Activated B cell treated with CpG ODN at 0.5 μM for 24 hours (primary cell): ENCODE measurements at regions of chr11 and their contacts with region 1.

Region 1: GRCh38 chr11:68370211-68371111 is 58.1 kb downstream of the LRP5 start:
- DNase-seq: peak; percentile 44
- ATAC-seq: peak; percentile 84
- H3K4me3 Mint-ChIP-seq: peak overlapping the region; percentile 81
- H3K27ac Mint-ChIP-seq: peak overlapping the region; percentile 84
- H3K4me1 Mint-ChIP-seq: peaks cover 72% of the 10 kb centered on the region
- H3K27me3 Mint-ChIP-seq: peaks cover 5% of the 10 kb centered on the region
- CTCF ChIP-seq: no peak

Region 2: DNA sequence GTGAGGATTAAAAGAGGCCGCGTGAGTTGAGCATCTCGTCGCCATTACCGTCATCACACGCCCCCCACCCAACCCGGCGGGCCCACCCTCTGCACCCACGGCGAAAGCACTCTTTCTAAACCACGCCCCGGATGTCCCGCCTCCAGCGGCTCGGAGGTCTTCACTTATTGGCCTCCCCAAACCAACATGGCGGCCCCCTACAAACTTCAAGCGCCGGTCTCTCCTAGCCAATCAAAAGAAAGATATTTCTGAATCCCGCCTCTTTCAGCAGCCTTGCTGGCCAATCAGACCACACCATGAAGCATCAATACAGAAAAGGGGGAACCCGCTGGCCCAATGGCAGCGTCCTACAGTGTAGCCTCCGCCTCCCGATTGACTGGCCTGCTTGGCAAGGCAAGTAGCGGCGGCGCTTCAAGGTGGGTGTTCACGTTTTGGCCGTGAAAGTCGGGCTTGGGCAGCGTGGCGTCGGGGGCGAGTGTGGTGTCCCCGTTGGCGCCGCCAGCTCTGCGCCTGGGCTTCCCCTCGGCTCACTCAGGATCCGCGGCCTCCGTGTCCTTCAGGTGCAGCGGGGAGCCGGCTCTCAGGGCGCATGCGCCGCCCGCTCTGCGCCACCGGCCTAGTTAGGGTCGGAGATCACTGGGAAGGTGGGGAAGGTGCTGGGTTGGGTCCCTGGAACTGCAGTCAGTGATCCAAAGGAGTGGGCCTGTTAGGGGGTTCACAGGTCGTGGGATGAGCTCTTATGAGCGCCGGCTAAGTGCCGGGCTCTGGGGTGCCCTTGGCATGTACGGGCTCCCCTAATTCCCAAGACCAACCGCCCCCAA is 339.9 kb before region 1 on chr11 and contains the start of gene NDUFS8:
- CTCF ChIA-PET with region 1: no interaction called
- POLR2A ChIA-PET with region 1: no interaction called
- intact Hi-C with region 1: loop called (anchors 5 kb)
- DNase-seq: peak; percentile 92
- ATAC-seq: peak; percentile 97
- H3K4me3 Mint-ChIP-seq: peak within 1 kb of the TSS; percentile 93
- H3K27ac Mint-ChIP-seq: peak within 1 kb of the TSS; percentile 83
- H3K4me1 Mint-ChIP-seq: peaks cover 22% of the 10 kb centered on the region
- H3K27me3 Mint-ChIP-seq: no peaks in the 10 kb centered on the region
- CTCF ChIP-seq: no peak
- total RNA-seq, gene NDUFS8: 93.7 and 101 TPM in 2 replicates

Region 3: GRCh38 chr11:68271781-68272608 is 98.5 kb before region 1 on chr11 and contains the start of gene C11orf24:
- CTCF ChIA-PET with region 1: no interaction called
- POLR2A ChIA-PET with region 1: interaction called, 32 read pairs
- intact Hi-C with region 1: loop called (anchors 2 kb)
- DNase-seq: peak; percentile 95
- ATAC-seq: peak; percentile 78
- H3K4me3 Mint-ChIP-seq: peak within 1 kb of the TSS; percentile 95
- H3K27ac Mint-ChIP-seq: peak within 1 kb of the TSS; percentile 98
- H3K4me1 Mint-ChIP-seq: peaks cover 79% of the 10 kb centered on the region
- H3K27me3 Mint-ChIP-seq: no peaks in the 10 kb centered on the region
- CTCF ChIP-seq: no peak
- total RNA-seq, gene C11orf24: 75.5 and 78.0 TPM in 2 replicates

Region 4: GRCh38 chr11:68383976-68384501 is 13.6 kb after region 1 on chr11:
- CTCF ChIA-PET with region 1: interaction called, 10 read pairs
- POLR2A ChIA-PET with region 1: interaction called, 39 read pairs
- intact Hi-C with region 1: loop called (anchors 1 kb)
- DNase-seq: peak; percentile 64
- ATAC-seq: peak; percentile 45
- H3K4me3 Mint-ChIP-seq: no peak overlapping the region
- H3K27ac Mint-ChIP-seq: no peak overlapping the region
- H3K4me1 Mint-ChIP-seq: peaks cover 45% of the 10 kb centered on the region
- H3K27me3 Mint-ChIP-seq: no peaks in the 10 kb centered on the region
- CTCF ChIP-seq: peak; percentile 50

Region 5: GRCh38 chr11:68441466-68442230 is 71.2 kb after region 1 on chr11:
- CTCF ChIA-PET with region 1: no interaction called
- POLR2A ChIA-PET with region 1: interaction called, 3 read pairs
- intact Hi-C with region 1: loop called (anchors 2 kb)
- DNase-seq: no peak
- ATAC-seq: peak; percentile 76
- H3K4me3 Mint-ChIP-seq: no peak overlapping the region
- H3K27ac Mint-ChIP-seq: no peak overlapping the region
- H3K4me1 Mint-ChIP-seq: peaks cover 30% of the 10 kb centered on the region
- H3K27me3 Mint-ChIP-seq: no peaks in the 10 kb centered on the region
- CTCF ChIP-seq: no peak